Prostate gland (tissue), 2 donors: ENCODE measurements at regions of chr2 and their contacts with region 1.

Region 1: GRCh38 chr2:163345908-163346573 is 389.8 kb downstream of the FIGN start:
- DNase-seq: peak; percentile 27
- H3K4me3 ChIP-seq: no peak overlapping the region
- H3K27ac ChIP-seq: no peak overlapping the region
- H3K4me1 ChIP-seq: no peaks in the 10 kb centered on the region
- H3K27me3 ChIP-seq: no peaks in the 10 kb centered on the region
- CTCF ChIP-seq: peak; percentile 56 to 81 (median 68)
- POLR2A ChIP-seq: no peak

Region 2: DNA sequence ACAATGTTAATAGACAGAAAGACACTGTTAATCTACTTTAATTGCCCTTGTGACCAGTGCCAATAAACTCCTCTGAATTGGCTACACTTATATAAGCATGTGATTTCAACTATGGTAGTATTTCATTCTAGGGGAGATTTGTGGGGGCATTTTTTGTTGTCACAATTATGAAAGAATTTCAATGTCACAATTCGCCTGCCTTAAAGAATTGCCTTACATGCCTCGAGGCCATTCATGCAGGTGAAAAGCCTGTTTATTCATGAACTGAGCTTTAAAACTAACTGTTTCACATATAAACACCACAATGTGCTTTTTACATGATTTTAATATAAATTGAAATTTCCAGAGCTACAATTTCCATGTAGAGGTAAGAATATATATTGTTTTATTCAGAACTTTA is 839.3 kb before region 1 on chr2:
- intact Hi-C with region 1: no loop called
- DNase-seq: no peak
- H3K4me3 ChIP-seq: no peak overlapping the region
- H3K27ac ChIP-seq: no peak overlapping the region
- H3K4me1 ChIP-seq: no peaks in the 10 kb centered on the region
- H3K27me3 ChIP-seq: no peaks in the 10 kb centered on the region
- CTCF ChIP-seq: no peak
- POLR2A ChIP-seq: no peak

Region 3: DNA sequence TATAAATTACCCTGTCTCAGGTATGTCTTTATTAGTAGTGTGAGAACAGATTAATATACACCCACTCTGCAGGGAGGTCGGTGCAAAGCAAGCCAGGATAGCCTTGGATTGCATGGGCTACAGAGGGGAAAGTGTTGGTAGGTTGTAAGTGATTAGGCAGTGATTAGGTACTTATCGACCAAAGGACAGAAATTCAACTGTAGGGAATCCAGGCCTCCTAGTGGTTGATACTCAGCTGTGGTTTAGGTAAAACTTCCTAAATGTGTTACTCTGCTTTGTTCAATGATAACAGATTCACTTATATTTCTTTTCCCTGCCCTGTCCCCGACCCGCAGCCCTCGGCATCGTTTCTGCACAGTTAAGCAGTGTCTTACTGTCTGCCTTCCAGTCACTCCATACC is 54.3 kb before region 1 on chr2:
- intact Hi-C with region 1: no loop called
- DNase-seq: no peak
- H3K4me3 ChIP-seq: no peak overlapping the region
- H3K27ac ChIP-seq: no peak overlapping the region
- H3K4me1 ChIP-seq: no peaks in the 10 kb centered on the region
- H3K27me3 ChIP-seq: no peaks in the 10 kb centered on the region
- CTCF ChIP-seq: no peak
- POLR2A ChIP-seq: no peak

Region 4: DNA sequence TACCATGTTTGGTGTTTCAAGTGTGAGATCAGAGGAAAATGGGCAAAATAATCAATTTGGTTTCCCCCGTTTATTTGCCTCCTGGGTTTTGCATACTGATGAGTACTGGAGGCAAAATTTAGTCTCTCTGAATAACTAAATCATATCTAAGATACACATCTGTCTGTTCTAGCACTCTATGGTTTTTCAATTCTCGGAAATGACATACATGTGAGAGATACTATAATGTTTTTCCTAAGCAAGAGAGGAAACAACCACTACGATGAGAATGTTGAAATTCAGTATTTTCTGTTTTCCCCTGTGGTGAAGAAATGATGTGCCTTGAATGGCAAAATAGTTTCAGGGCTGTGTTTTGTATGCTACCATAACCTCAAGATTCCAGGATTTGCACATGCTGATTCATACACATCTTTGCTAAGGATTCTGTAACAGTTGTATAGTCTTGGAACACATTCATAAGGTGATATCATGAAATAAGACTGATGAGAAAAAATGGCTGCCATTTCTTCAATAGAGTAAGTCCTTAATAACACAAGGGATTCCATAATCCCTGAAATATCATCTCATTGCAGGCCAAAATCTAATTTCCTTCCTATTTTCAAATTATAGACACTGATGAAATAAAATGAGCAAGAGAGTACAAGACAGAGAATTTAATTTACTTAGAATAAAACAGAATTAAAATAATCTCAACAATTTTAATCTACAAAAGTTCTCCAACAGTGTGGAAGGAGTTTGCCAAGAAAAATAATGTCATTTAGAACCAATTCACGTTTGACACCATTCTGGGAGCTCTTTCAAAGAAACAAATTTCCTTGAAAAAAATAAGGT is 73.2 kb after region 1 on chr2:
- intact Hi-C with region 1: no loop called
- DNase-seq: no peak
- H3K4me3 ChIP-seq: no peak overlapping the region
- H3K27ac ChIP-seq: no peak overlapping the region
- H3K4me1 ChIP-seq: no peaks in the 10 kb centered on the region
- H3K27me3 ChIP-seq: no peaks in the 10 kb centered on the region
- CTCF ChIP-seq: no peak
- POLR2A ChIP-seq: no peak

Region 5: GRCh38 chr2:163610817-163611556 is 264.9 kb after region 1 on chr2:
- intact Hi-C with region 1: loop called (anchors 5 kb)
- DNase-seq: peak; percentile 15
- H3K4me3 ChIP-seq: no peak overlapping the region
- H3K27ac ChIP-seq: no peak overlapping the region
- H3K4me1 ChIP-seq: no peaks in the 10 kb centered on the region
- H3K27me3 ChIP-seq: no peaks in the 10 kb centered on the region
- CTCF ChIP-seq: peak in 1 of 4 experiments; percentile 21
- POLR2A ChIP-seq: no peak

Region 6: GRCh38 chr2:164061129-164061746 is 715.2 kb after region 1 on chr2:
- intact Hi-C with region 1: loop called (anchors 10 kb)
- DNase-seq: no peak
- H3K4me3 ChIP-seq: no peak overlapping the region
- H3K27ac ChIP-seq: no peak overlapping the region
- H3K4me1 ChIP-seq: no peaks in the 10 kb centered on the region
- H3K27me3 ChIP-seq: no peaks in the 10 kb centered on the region
- CTCF ChIP-seq: peak in 3 of 4 experiments; percentile 35 to 42 (median 42)
- POLR2A ChIP-seq: no peak

Region 7: DNA sequence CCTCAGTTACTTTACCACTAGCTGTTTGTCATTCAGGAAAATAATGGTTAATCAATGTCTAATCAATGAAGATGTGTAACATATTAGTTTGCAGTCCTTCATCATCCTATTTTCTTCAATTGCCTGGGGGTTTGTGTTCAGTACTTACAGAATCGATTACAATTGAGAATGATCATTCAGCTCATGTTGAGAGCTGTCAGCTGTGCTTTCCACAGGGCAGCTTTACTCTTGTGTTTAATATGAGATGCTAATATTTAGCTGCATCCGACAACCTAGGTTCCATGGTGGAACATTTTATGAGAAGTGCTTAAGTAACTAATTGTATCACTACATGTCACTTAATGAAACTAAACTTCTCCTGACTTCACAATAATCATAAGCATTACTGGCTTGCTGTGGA is 1083.3 kb after region 1 on chr2:
- intact Hi-C with region 1: loop called (anchors 5 kb)
- DNase-seq: no peak
- H3K4me3 ChIP-seq: no peak overlapping the region
- H3K27ac ChIP-seq: no peak overlapping the region
- H3K4me1 ChIP-seq: no peaks in the 10 kb centered on the region
- H3K27me3 ChIP-seq: no peaks in the 10 kb centered on the region
- CTCF ChIP-seq: no peak
- POLR2A ChIP-seq: no peak